Naive thymus-derived CD4-positive, alpha-beta T cell (primary cell): ENCODE measurements at regions of chr2 and their contacts with region 1.

Region 1: GRCh38 chr2:74587664-74588277 is 33.3 kb downstream of the DOK1 start:
- DNase-seq: peak; percentile 27 to 74 (median 63)
- ATAC-seq: peak; percentile 85
- H3K4me3 ChIP-seq: no peak overlapping the region
- H3K4me3 Mint-ChIP-seq: no peak overlapping the region
- H3K27ac ChIP-seq: no peak overlapping the region
- H3K27ac Mint-ChIP-seq: peak overlapping the region in 1 of 9 donors; percentile 30
- H3K4me1 ChIP-seq: no peaks in the 10 kb centered on the region
- H3K4me1 Mint-ChIP-seq: peaks cover 8 to 35% (median 15%) of the 10 kb centered on the region in 7 donors
- H3K27me3 ChIP-seq: no peaks in the 10 kb centered on the region
- H3K27me3 Mint-ChIP-seq: peaks cover 8 to 26% (median 17%) of the 10 kb centered on the region in 5 donors

Region 2: DNA sequence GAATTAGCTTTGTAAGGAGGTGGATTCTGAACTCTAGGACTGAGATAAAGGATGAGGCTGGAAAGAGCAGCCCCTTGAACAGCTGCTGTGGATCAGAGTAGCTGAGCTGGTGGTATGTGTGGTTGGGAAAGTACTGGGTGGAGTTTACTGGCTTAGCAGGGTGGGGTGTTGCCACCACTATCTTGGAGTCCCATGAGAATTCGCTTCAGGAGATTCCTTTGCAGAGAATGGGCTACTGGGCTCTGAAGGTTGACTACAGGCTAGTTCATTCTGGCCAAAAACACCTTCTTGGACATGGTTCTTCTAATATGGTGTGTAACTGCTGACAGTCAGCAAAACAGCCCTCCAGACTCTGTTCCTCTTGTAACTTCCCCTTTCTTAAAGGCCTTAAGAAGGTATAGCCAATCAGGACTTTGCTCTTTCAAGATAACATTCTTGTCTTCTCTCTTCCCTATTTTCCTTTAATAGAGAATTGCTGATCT is 550.4 kb before region 1 on chr2:
- CTCF ChIA-PET with region 1: no interaction called
- POLR2A ChIA-PET with region 1: no interaction called
- intact Hi-C with region 1: no loop called
- DNase-seq: no peak
- ATAC-seq: peak; percentile 82
- H3K4me3 ChIP-seq: no peak overlapping the region
- H3K4me3 Mint-ChIP-seq: peak overlapping the region in 7 of 10 donors; percentile 1 to 71 (median 25)
- H3K27ac ChIP-seq: no peak overlapping the region
- H3K27ac Mint-ChIP-seq: peak overlapping the region in 8 of 9 donors; percentile 1 to 89 (median 56)
- H3K4me1 ChIP-seq: peaks cover 38 to 65% of the 10 kb centered on the region in 2 donors
- H3K4me1 Mint-ChIP-seq: peaks cover 63 to 93% (median 87%) of the 10 kb centered on the region in 7 donors
- H3K27me3 ChIP-seq: no peaks in the 10 kb centered on the region
- H3K27me3 Mint-ChIP-seq: no peaks in the 10 kb centered on the region

Region 3: DNA sequence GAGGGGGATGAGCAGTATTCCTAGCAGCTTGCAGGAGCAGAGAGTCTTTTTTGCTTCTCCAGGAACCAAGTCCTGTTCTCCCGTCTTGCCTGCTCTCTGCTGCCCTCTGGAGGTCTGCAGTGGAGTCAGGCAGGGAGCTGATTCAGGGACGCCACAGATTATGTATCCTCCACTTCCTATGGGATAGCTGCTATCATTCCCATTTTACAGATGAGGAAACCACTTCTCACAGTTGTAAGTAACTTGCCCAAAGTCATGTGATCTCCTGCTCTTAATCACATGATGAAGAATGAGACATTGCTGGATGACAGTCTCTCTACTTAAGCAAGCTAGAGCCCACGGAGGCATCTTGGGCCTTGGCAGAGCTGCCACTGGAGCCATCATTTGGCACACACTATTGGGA is 252.8 kb before region 1 on chr2:
- CTCF ChIA-PET with region 1: no interaction called
- POLR2A ChIA-PET with region 1: interaction called, 3 read pairs
- intact Hi-C with region 1: loop called in 1 of 2 experiments (anchors 2 kb)
- DNase-seq: peak; percentile 36 to 81 (median 67)
- ATAC-seq: peak; percentile 90
- H3K4me3 ChIP-seq: no peak overlapping the region
- H3K4me3 Mint-ChIP-seq: no peak overlapping the region
- H3K27ac ChIP-seq: no peak overlapping the region
- H3K27ac Mint-ChIP-seq: peak overlapping the region in 2 of 9 donors; percentile 62 to 77
- H3K4me1 ChIP-seq: peaks cover 0 to 5% of the 10 kb centered on the region in 2 donors
- H3K4me1 Mint-ChIP-seq: peaks cover 0 to 14% (median 4%) of the 10 kb centered on the region in 7 donors
- H3K27me3 ChIP-seq: no peaks in the 10 kb centered on the region
- H3K27me3 Mint-ChIP-seq: peaks cover 0 to 2% (median 0%) of the 10 kb centered on the region in 5 donors

Region 4: GRCh38 chr2:74414881-74415761 is 172.7 kb before region 1 on chr2:
- CTCF ChIA-PET with region 1: no interaction called
- POLR2A ChIA-PET with region 1: interaction called, 3 read pairs
- intact Hi-C with region 1: loop called in 1 of 2 experiments (anchors 1 kb)
- DNase-seq: peak in 4 of 9 donors; percentile 14 to 33 (median 26)
- ATAC-seq: peak; percentile 54
- H3K4me3 ChIP-seq: peak overlapping the region; percentile 57
- H3K4me3 Mint-ChIP-seq: peak overlapping the region; percentile 37 to 87 (median 78)
- H3K27ac ChIP-seq: peak overlapping the region; percentile 49
- H3K27ac Mint-ChIP-seq: peak overlapping the region in 4 of 9 donors; percentile 21 to 92 (median 74)
- H3K4me1 ChIP-seq: peaks cover 0 to 14% of the 10 kb centered on the region in 2 donors
- H3K4me1 Mint-ChIP-seq: peaks cover 8 to 42% (median 31%) of the 10 kb centered on the region in 7 donors
- H3K27me3 ChIP-seq: peaks cover 0 to 4% of the 10 kb centered on the region in 2 donors
- H3K27me3 Mint-ChIP-seq: peaks cover 0 to 12% (median 0%) of the 10 kb centered on the region in 5 donors

Region 5: GRCh38 chr2:74472086-74472944 is 115.5 kb before region 1 on chr2 and contains the start of gene MRPL53:
- CTCF ChIA-PET with region 1: interaction called, 5 read pairs
- POLR2A ChIA-PET with region 1: interaction called, 3 read pairs
- intact Hi-C with region 1: loop called in 1 of 2 experiments (anchors 1 kb)
- DNase-seq: peak; percentile 91 to 98 (median 95)
- ATAC-seq: peak; percentile 96
- H3K4me3 ChIP-seq: peak within 1 kb of the TSS; percentile 89
- H3K4me3 Mint-ChIP-seq: peak within 1 kb of the TSS; percentile 88 to 99 (median 98)
- H3K27ac ChIP-seq: peak within 1 kb of the TSS; percentile 91
- H3K27ac Mint-ChIP-seq: peak within 1 kb of the TSS; percentile 94 to 99 (median 98)
- H3K4me1 ChIP-seq: peaks cover 14 to 19% of the 10 kb centered on the region in 2 donors
- H3K4me1 Mint-ChIP-seq: peaks cover 9 to 32% (median 29%) of the 10 kb centered on the region in 7 donors
- H3K27me3 ChIP-seq: no peaks in the 10 kb centered on the region
- H3K27me3 Mint-ChIP-seq: no peaks in the 10 kb centered on the region
- total RNA-seq, gene MRPL53: 45.7 to 108 (median 94.5) TPM

Region 6: DNA sequence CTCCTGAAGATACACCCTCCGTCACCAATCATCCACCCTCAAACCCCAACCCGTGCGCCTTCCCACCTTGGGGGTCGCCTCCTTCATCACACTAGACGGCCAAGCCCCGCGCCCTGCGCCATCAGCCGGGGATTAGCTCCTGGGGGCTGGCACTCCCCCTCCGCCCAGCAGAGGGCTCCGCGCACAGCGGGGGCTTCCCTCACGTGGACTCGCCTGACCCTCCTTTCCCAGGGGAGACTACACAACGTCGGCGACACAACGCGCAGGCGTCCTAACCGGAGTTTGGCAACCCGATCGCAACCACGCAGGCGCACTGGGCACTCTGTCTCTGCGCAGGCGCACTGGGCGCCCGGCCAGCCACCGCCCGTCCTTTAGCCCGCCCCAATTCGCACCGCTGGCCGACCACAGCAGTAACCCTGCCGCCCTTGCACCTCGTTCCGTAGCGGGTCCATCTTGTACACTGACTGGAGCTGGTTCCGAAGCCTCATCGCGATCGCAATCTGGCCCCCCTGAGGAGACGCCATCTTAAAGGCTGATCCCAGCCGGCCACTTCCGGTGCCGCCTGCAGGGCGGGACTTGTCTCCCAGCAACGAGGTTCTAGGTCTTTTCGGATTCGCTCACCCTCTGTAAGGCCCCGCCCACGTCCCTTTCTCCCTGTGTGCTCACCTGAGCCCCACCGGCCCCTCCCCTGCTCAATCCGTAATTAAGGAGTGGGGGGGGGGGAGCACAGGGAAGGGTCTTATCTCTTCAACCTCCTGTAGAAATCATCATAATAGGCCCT is 80.4 kb before region 1 on chr2 and contains the start of gene PCGF1:
- CTCF ChIA-PET with region 1: interaction called, 3 read pairs
- POLR2A ChIA-PET with region 1: interaction called, 3 read pairs
- intact Hi-C with region 1: loop called in 1 of 2 experiments (anchors 2 kb)
- DNase-seq: peak; percentile 97 to 99 (median 98)
- ATAC-seq: peak; percentile 96
- H3K4me3 ChIP-seq: peak within 1 kb of the TSS; percentile 96
- H3K4me3 Mint-ChIP-seq: peak within 1 kb of the TSS; percentile 95 to 100 (median 99)
- H3K27ac ChIP-seq: peak within 1 kb of the TSS; percentile 94
- H3K27ac Mint-ChIP-seq: peak within 1 kb of the TSS; percentile 97 to 100 (median 100)
- H3K4me1 ChIP-seq: peaks cover 16 to 29% of the 10 kb centered on the region in 2 donors
- H3K4me1 Mint-ChIP-seq: peaks cover 34 to 66% (median 57%) of the 10 kb centered on the region in 7 donors
- H3K27me3 ChIP-seq: peaks cover 3 to 16% of the 10 kb centered on the region in 2 donors
- H3K27me3 Mint-ChIP-seq: peaks cover 47 to 58% (median 49%) of the 10 kb centered on the region in 5 donors
- total RNA-seq, gene PCGF1: 25.7 to 37.0 (median 31.2) TPM

Region 7: GRCh38 chr2:74559912-74560311 is 27.9 kb before region 1 on chr2:
- CTCF ChIA-PET with region 1: interaction called, 3 read pairs
- POLR2A ChIA-PET with region 1: interaction called, 4 read pairs
- intact Hi-C with region 1: loop called in 1 of 2 experiments (anchors 1 kb)
- DNase-seq: no peak
- ATAC-seq: no peak
- H3K4me3 ChIP-seq: no peak overlapping the region
- H3K4me3 Mint-ChIP-seq: no peak overlapping the region
- H3K27ac ChIP-seq: no peak overlapping the region
- H3K27ac Mint-ChIP-seq: no peak overlapping the region
- H3K4me1 ChIP-seq: peaks cover 4 to 8% of the 10 kb centered on the region in 2 donors
- H3K4me1 Mint-ChIP-seq: peaks cover 0 to 47% (median 12%) of the 10 kb centered on the region in 7 donors
- H3K27me3 ChIP-seq: no peaks in the 10 kb centered on the region
- H3K27me3 Mint-ChIP-seq: peaks cover 0 to 19% (median 13%) of the 10 kb centered on the region in 5 donors

Region 8: GRCh38 chr2:74876081-74876886 is 288.5 kb after region 1 on chr2:
- CTCF ChIA-PET with region 1: no interaction called
- POLR2A ChIA-PET with region 1: no interaction called
- intact Hi-C with region 1: loop called in 1 of 2 experiments (anchors 5 kb)
- DNase-seq: peak in 7 of 9 donors; percentile 36 to 80 (median 76)
- ATAC-seq: peak; percentile 74
- H3K4me3 ChIP-seq: no peak overlapping the region
- H3K4me3 Mint-ChIP-seq: no peak overlapping the region
- H3K27ac ChIP-seq: no peak overlapping the region
- H3K27ac Mint-ChIP-seq: peak overlapping the region in 6 of 9 donors; percentile 20 to 78 (median 62)
- H3K4me1 ChIP-seq: peaks cover 0 to 3% of the 10 kb centered on the region in 2 donors
- H3K4me1 Mint-ChIP-seq: peaks cover 3 to 14% (median 6%) of the 10 kb centered on the region in 7 donors
- H3K27me3 ChIP-seq: no peaks in the 10 kb centered on the region
- H3K27me3 Mint-ChIP-seq: no peaks in the 10 kb centered on the region